HepG2 (cell line): ENCODE measurements at regions of chr6 and their contacts with region 1.

Region 1: GRCh38 chr6:149098700-149099276 is 218.7 kb upstream of the TAB2 start:
- DNase-seq: no peak
- ATAC-seq: no peak
- H3K4me3 ChIP-seq: no peak overlapping the region
- H3K27ac ChIP-seq: no peak overlapping the region
- H3K4me1 ChIP-seq: no peaks in the 10 kb centered on the region
- H3K27me3 ChIP-seq: peaks cover 2 to 5% of the 10 kb centered on the region in 2 experiments; a peak in 2 of 5 replicates
- CTCF ChIP-seq: no peak
- EP300 ChIP-seq: no peak
- POLR2A ChIP-seq: no peak
- RAD21 ChIP-seq: no peak

Region 2: DNA sequence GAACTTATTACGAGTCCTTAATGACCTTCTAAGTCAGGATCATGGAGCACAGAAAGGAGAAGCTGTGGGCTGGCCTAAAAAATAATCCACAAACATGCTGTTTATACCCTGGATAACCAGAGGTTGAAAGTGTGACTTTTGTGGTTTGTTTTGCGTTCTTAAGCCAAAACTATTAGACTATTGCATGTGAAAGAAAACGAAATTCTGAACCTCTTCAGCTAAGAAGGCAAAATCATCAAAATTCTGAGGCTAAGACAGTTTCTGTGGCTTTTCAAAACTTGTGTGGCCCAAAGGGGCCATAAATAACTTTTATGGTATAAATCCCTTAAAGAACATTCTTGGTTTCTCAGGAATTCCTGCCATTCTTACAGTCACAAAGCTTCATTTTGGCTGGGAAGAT is 100.9 kb before region 1 on chr6:
- CTCF ChIA-PET with region 1: no interaction called
- POLR2A ChIA-PET with region 1: no interaction called
- in situ Hi-C with region 1: no loop called
- intact Hi-C with region 1: no loop called
- DNase-seq: no peak
- ATAC-seq: no peak
- H3K4me3 ChIP-seq: no peak overlapping the region; a peak in 1 of 6 replicates
- H3K27ac ChIP-seq: no peak overlapping the region
- H3K4me1 ChIP-seq: no peaks in the 10 kb centered on the region
- H3K27me3 ChIP-seq: 0 out of 5 replicates have a peak, but pooled peaks cover 0 to 4% of the 10 kb centered on the region in 2 experiments
- CTCF ChIP-seq: no peak
- EP300 ChIP-seq: no peak
- POLR2A ChIP-seq: no peak
- RAD21 ChIP-seq: no peak

Region 3: GRCh38 chr6:149169761-149170511 is 71.1 kb after region 1 on chr6:
- CTCF ChIA-PET with region 1: no interaction called
- POLR2A ChIA-PET with region 1: no interaction called
- in situ Hi-C with region 1: no loop called
- intact Hi-C with region 1: loop called (anchors 2 kb)
- DNase-seq: no peak
- ATAC-seq: peak; percentile 72
- H3K4me3 ChIP-seq: no peak overlapping the region
- H3K27ac ChIP-seq: no peak overlapping the region
- H3K4me1 ChIP-seq: peaks cover 26% of the 10 kb centered on the region
- H3K27me3 ChIP-seq: peaks cover 0 to 67% of the 10 kb centered on the region in 2 experiments; a peak in 3 of 5 replicates
- CTCF ChIP-seq: no peak
- EP300 ChIP-seq: no peak
- POLR2A ChIP-seq: no peak
- RAD21 ChIP-seq: no peak